Right ventricle myocardium inferior (tissue), 1 donor: ENCODE measurements at regions of chr16 and their contacts with region 1.

Region 1: DNA sequence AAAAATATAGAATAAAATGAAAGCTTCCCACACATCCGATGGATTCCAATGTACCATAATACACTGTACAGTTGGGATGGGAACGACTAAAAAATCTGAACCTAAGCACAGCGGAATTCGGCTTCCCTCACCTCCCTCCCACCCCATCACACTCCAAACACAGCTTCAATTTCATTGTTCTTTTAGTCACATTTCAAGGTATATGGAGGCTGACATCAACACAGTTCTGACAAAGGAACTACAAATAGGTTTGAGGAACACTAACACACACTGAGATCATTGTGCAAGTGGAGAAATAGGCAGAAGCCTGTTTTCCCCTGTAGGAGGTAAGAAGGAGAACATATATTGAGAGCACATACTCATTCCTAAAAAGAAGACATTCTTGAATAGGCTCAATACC is 85.1 kb downstream of the WDR59 start:
- DNase-seq: no peak
- ATAC-seq: no peak

Region 2: GRCh38 chr16:74942977-74943918 is 43.4 kb after region 1 on chr16:
- intact Hi-C with region 1: loop called (anchors 1 kb)
- DNase-seq: no peak
- ATAC-seq: peak; percentile 84

Region 3: DNA sequence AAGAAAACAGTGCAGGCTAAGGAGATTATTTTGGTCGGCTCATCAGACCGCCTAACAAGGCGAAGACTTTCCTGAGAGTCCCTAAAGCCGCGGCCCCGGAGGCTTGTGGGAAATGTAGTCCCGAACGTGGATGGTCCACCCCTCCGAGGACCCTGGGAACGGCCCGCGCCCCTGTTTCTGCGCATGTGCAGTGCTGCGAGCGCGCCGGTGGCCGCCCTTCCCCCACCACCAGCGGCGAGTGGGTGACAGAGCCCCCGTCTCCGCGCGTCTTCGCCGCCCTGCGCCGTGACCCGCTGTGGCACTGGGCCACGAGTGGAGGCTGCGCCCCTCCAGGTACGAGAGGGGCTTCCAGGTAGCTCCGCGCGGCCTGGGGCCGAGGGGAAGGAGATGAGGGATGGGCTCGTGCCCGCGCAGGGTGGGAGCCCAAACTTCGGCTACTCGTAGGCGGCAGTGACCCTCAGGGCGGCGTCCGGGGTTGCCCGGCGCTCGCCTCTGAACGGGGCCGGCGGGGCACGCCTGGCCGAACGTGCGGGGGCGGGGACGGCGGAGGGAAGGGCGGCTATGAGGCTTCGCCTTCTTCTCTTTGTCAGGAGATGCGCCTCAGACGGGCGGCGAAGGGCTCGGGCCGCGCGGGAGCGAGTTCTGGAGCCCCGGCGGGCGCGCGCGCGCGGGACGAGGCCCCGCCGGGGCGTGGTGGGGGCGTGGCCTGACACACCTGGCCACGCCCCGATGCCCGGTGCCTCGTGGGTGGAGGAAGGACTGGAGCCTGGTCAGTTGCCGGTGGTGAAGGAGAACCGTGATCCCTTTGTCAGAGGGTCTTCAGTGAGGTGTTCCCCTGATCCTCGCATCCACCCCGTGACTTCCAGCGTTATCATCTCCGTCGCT is 248.7 kb after region 1 on chr16 and contains the start of gene ZFP1:
- intact Hi-C with region 1: no loop called
- DNase-seq: peak; percentile 98
- ATAC-seq: peak; percentile 99
- total RNA-seq, gene ZFP1: 5.8 TPM